HepG2 (cell line): ENCODE measurements at regions of chr14 and their contacts with region 1.

Region 1: DNA sequence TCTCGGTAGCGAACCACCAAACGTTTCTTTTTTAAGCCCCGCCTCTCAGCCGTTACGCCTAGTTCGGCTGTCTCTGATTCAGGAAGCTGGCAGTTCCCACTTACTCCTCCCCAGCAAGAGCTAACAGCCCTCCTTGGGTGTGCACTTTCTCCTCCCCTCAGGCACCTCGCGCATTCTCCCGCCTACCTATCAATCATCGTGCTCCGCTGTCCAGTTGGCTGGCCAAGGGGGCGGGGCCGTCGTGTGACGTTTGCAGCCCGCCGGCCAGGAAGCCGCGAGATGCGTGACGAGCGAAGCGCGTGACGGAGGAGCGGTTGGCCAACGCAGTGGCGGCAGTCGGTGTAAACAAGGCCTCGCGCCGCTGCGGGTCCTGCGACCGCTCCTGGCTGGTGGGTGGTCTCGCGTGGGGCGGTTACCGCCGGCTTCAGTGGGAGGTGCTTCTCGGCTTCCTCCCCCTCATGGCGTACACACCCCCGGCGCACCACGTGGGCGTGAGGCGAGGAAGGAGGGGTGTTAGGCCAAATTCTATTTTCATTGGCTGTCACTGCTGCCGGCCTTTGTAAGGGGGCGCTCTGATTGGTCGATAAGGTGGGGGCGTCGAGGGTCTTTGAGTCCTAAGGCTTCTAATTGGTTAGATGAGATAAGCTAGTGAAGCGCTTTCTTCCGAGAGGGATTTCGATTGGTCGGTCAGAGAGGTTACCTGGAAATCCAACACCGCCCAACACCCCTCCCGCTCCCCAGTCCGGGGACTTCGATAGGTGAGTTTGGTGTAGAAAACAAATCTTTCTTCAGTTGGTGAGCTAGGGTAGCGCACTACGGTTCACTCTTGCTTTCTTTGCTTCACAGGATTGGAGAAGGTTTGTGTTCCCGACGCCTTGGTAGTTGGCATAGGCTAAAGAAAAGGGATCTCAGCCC is at the starts of genes DCAF11 and NRL:
- DNase-seq: peak; percentile 100
- ATAC-seq: peak; percentile 88
- H3K4me3 ChIP-seq: peak within 1 kb of the TSS; percentile 66 to 96 (median 85)
- H3K27ac ChIP-seq: peak within 1 kb of the TSS; percentile 98
- H3K4me1 ChIP-seq: peaks cover 48% of the 10 kb centered on the region
- H3K27me3 ChIP-seq: no peaks in the 10 kb centered on the region; a peak in 1 of 5 replicates
- CTCF ChIP-seq: peak; percentile 50
- EP300 ChIP-seq: peak in 1 of 2 experiments; percentile 77; a peak in 2 of 4 replicates
- POLR2A ChIP-seq: peak in 1 of 2 experiments; percentile 97; a peak in 2 of 4 replicates
- RAD21 ChIP-seq: peak; percentile 78
- total RNA-seq, gene DCAF11: 257 and 342 TPM in 2 replicates
- total RNA-seq, gene NRL: 4.7 and 5.2 TPM in 2 replicates

Region 2: DNA sequence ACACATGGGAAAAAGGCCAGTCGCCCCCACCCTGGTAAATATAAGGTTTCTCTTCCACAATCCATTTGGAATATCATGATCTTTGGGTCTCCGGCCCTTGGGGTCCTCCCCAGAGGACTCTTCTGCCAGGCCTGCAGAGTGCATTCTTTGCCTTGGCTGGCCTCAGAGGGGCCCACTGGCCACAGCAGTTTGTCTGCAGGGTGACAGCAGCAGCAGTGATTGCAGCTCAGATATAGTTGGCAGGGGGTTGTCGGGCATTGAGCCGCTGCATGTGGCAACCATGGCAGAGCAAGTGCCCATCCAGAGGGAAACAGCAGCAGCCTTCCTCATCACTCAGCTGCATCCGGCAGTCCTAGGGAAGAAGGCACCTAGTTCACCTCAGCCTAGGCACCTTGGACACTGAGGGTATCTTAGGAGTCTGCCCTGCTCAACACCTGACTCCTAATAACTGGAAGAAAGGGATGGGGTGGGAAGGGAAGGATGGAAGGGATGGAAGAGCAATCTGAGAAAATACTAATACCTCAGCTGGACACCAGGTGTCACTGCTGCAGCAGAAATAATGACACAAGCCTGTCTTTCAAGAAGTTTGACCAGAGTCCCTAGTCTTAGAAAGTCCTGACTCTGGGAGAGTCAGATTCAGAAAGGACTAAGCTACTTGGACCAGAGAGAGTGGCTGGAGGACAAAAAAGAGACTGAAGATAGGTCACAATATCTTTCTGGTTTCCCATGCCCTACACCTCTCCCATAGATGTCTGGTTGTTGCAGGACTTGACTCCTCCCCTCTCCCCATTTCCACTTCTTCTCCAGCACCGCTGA is 1141.4 kb before region 1 on chr14:
- CTCF ChIA-PET with region 1: no interaction called
- POLR2A ChIA-PET with region 1: interaction called, 21 read pairs
- in situ Hi-C with region 1: no loop called
- intact Hi-C with region 1: no loop called
- DNase-seq: peak; percentile 82
- ATAC-seq: no peak
- H3K4me3 ChIP-seq: no peak overlapping the region
- H3K27ac ChIP-seq: peak overlapping the region; percentile 97
- H3K4me1 ChIP-seq: peaks cover 65% of the 10 kb centered on the region
- H3K27me3 ChIP-seq: no peaks in the 10 kb centered on the region
- CTCF ChIP-seq: no peak
- EP300 ChIP-seq: no peak
- POLR2A ChIP-seq: peak in 1 of 2 experiments; percentile 73; a peak in 2 of 4 replicates
- RAD21 ChIP-seq: peak; percentile 97

Region 3: GRCh38 chr14:23916004-23916403 is 198.8 kb before region 1 on chr14:
- CTCF ChIA-PET with region 1: no interaction called
- POLR2A ChIA-PET with region 1: no interaction called
- in situ Hi-C with region 1: no loop called
- intact Hi-C with region 1: no loop called
- DNase-seq: no peak
- ATAC-seq: no peak
- H3K4me3 ChIP-seq: no peak overlapping the region
- H3K27ac ChIP-seq: no peak overlapping the region
- H3K4me1 ChIP-seq: no peaks in the 10 kb centered on the region
- H3K27me3 ChIP-seq: peaks cover 0 to 11% of the 10 kb centered on the region in 2 experiments; a peak in 1 of 5 replicates
- CTCF ChIP-seq: no peak
- EP300 ChIP-seq: no peak
- POLR2A ChIP-seq: no peak
- RAD21 ChIP-seq: no peak

Region 4: GRCh38 chr14:23984891-23985602 is 129.7 kb before region 1 on chr14:
- CTCF ChIA-PET with region 1: no interaction called
- POLR2A ChIA-PET with region 1: interaction called, 21 read pairs
- in situ Hi-C with region 1: no loop called
- intact Hi-C with region 1: no loop called
- DNase-seq: peak; percentile 36
- ATAC-seq: no peak
- H3K4me3 ChIP-seq: no peak overlapping the region
- H3K27ac ChIP-seq: no peak overlapping the region
- H3K4me1 ChIP-seq: peaks cover 82% of the 10 kb centered on the region
- H3K27me3 ChIP-seq: no peaks in the 10 kb centered on the region
- CTCF ChIP-seq: no peak
- EP300 ChIP-seq: no peak
- POLR2A ChIP-seq: no peak
- RAD21 ChIP-seq: no peak

Region 5: GRCh38 chr14:24080888-24081738 is 33.7 kb before region 1 on chr14:
- CTCF ChIA-PET with region 1: no interaction called
- POLR2A ChIA-PET with region 1: interaction called, 31 read pairs
- in situ Hi-C with region 1: no loop called
- intact Hi-C with region 1: no loop called
- DNase-seq: peak; percentile 38
- ATAC-seq: peak; percentile 83
- H3K4me3 ChIP-seq: peak overlapping the region; percentile 53 to 77 (median 73)
- H3K27ac ChIP-seq: no peak overlapping the region
- H3K4me1 ChIP-seq: peaks cover 22% of the 10 kb centered on the region
- H3K27me3 ChIP-seq: peaks cover 18 to 81% of the 10 kb centered on the region in 2 experiments
- CTCF ChIP-seq: peak; percentile 2; the same call in 1 of the 2 replicates
- EP300 ChIP-seq: no peak
- POLR2A ChIP-seq: peak in 1 of 2 experiments; percentile 33; a peak in 1 of 4 replicates
- RAD21 ChIP-seq: peak; percentile 55; the same call in 1 of the 2 replicates

Region 6: DNA sequence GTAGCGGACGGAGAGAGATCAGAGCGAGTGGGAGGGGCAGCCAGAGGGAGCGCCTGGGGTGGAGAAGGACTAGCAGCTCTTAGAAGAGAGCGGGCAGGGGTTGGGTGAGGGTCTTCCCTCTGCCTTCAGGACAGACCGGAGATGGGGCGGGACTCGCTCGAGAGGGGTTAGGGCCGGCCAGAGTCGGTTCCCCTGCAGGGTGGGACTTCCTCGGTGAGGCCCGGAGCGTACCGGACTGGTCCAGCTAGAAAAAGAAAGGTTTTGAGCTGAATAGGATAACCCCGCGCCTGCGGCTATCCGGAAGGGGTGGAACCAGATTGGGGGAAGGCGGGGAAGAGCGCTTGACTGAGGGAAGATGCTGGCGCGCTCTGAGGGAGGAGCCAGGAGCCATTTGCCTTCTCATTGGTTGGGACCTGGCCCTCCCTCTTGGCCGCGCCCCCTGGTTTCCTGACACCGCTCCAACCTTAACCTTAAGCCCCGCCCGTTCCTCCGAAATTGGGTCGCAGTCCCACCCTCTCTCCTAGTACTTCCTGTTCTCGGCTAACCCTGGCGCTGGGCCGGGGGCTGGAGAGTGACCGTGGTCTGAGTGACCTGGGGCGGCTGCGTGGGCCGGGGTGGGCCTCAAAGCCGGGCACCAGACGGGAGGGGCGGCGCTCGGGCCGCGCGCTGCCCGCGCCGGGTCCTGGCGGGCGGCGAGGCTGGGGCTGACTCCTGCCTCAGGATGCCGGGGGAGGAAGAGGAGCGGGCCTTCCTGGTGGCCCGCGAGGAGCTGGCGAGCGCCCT is 32.4 kb after region 1 on chr14 and contains the start of gene RNF31:
- CTCF ChIA-PET with region 1: no interaction called
- POLR2A ChIA-PET with region 1: interaction called, 977 read pairs
- in situ Hi-C with region 1: no loop called
- intact Hi-C with region 1: loop called (anchors 1 kb)
- DNase-seq: peak; percentile 100
- ATAC-seq: peak; percentile 90
- H3K4me3 ChIP-seq: peak within 1 kb of the TSS; percentile 91 to 100 (median 96)
- H3K27ac ChIP-seq: peak within 1 kb of the TSS; percentile 76
- H3K4me1 ChIP-seq: peaks cover 59% of the 10 kb centered on the region
- H3K27me3 ChIP-seq: peaks cover 0 to 3% of the 10 kb centered on the region in 2 experiments; a peak in 1 of 5 replicates
- CTCF ChIP-seq: no peak; the same call in 1 of the 2 replicates
- EP300 ChIP-seq: no peak
- POLR2A ChIP-seq: peak in 1 of 2 experiments; percentile 67; a peak in 2 of 4 replicates
- RAD21 ChIP-seq: peak; percentile 39
- total RNA-seq, gene RNF31: 65.9 and 86.8 TPM in 2 replicates

Region 7: GRCh38 chr14:24241829-24242443 is 127.1 kb after region 1 on chr14:
- CTCF ChIA-PET with region 1: no interaction called
- POLR2A ChIA-PET with region 1: interaction called, 64 read pairs
- in situ Hi-C with region 1: no loop called
- intact Hi-C with region 1: no loop called
- DNase-seq: peak; percentile 97
- ATAC-seq: peak; percentile 91
- H3K4me3 ChIP-seq: peak overlapping the region; percentile 64 to 81 (median 71)
- H3K27ac ChIP-seq: peak overlapping the region; percentile 91
- H3K4me1 ChIP-seq: peaks cover 47% of the 10 kb centered on the region
- H3K27me3 ChIP-seq: no peaks in the 10 kb centered on the region; a peak in 1 of 5 replicates
- CTCF ChIP-seq: peak; percentile 62
- EP300 ChIP-seq: peak in 1 of 2 experiments; percentile 86; a peak in 2 of 4 replicates
- POLR2A ChIP-seq: no peak
- RAD21 ChIP-seq: 0 out of 2 replicates have a peak, but pooled peaks have one; percentile 30

Region 8: GRCh38 chr14:24431569-24432258 is 316.9 kb after region 1 on chr14:
- CTCF ChIA-PET with region 1: no interaction called
- POLR2A ChIA-PET with region 1: interaction called, 11 read pairs
- in situ Hi-C with region 1: no loop called
- intact Hi-C with region 1: no loop called
- DNase-seq: peak; percentile 97
- ATAC-seq: peak; percentile 66
- H3K4me3 ChIP-seq: peak overlapping the region in 2 of 3 experiments; percentile 80 to 82; a peak in 4 of 6 replicates
- H3K27ac ChIP-seq: no peak overlapping the region
- H3K4me1 ChIP-seq: peaks cover 52% of the 10 kb centered on the region
- H3K27me3 ChIP-seq: no peaks in the 10 kb centered on the region; a peak in 1 of 5 replicates
- CTCF ChIP-seq: peak; percentile 100
- EP300 ChIP-seq: 0 out of 4 replicates have a peak, but pooled peaks of 1 of the 2 experiments have one; percentile 45
- POLR2A ChIP-seq: peak in 1 of 2 experiments; percentile 21; a peak in 2 of 4 replicates
- RAD21 ChIP-seq: peak; percentile 100